ENCODE measurements at regions of chr5 and their contacts with region 1.

Region 1: DNA sequence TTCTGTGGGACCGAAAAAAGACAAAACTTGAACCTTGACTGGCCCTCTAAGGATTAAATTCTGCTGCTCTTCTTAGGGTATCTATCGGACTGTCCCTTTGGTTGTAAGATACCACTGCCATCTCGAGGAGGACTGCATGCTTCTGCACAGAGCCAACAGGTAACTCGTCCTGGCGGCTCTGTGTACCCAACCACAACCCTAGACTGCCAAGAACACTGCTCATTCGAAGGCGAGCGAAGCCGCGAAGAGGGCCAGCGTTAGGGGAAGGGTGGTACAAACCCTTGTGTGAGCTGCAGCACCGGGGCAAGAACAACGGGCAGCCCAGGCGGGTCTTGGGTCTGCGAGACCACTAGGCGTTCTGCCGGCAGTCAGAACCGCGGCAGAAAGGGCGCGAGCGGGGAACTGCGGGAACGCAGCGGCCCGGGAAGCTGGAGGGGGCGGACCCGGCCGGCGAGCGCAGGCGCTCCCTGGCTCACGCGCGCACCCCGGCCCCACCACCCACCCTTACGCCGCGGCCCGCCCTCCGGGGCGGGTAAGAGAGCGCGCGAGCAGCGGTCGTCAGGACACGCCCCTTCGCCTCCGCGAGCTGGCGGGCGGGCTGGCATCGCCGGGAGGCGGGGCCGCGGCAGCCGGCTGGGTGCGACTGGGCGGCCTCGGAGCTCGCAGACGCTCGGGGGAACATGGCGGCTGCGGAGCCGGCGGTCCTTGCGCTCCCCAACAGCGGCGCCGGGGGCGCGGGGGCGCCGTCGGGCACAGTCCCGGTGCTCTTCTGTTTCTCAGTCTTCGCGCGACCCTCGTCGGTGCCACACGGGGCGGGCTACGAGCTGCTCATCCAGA is at the start of gene ISOC1:
- DNase-seq: peak; percentile 95
- ATAC-seq: peak; percentile 95
- total RNA-seq, gene ISOC1: 113 TPM

Region 2: GRCh38 chr5:128844354-128844923 is 249.9 kb before region 1 on chr5:
- intact Hi-C with region 1: no loop called
- DNase-seq: no peak
- ATAC-seq: no peak

Region 3: DNA sequence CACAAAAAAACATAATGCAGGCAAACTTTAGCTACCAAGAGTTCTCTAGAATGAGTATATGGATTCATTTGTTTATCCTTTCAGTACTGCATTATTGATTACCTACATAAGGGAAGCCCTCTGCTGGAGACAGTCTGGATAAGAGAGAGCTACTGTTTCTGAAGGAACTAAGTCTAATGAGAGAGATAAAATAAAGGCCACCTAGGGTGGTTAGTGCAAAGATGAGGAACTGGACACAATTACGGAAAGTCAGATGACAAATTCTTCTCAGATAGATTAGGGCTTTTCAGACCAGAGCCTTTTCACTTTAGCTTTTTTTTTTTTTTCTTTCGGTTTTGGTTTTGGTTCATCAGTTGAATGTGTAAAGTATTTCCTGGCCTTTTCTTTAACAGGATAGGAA is 31.5 kb after region 1 on chr5:
- intact Hi-C with region 1: loop called (anchors 2 kb)
- DNase-seq: no peak
- ATAC-seq: no peak